ENCODE measurements at regions of chrX and their contacts with region 1.

Region 1: DNA sequence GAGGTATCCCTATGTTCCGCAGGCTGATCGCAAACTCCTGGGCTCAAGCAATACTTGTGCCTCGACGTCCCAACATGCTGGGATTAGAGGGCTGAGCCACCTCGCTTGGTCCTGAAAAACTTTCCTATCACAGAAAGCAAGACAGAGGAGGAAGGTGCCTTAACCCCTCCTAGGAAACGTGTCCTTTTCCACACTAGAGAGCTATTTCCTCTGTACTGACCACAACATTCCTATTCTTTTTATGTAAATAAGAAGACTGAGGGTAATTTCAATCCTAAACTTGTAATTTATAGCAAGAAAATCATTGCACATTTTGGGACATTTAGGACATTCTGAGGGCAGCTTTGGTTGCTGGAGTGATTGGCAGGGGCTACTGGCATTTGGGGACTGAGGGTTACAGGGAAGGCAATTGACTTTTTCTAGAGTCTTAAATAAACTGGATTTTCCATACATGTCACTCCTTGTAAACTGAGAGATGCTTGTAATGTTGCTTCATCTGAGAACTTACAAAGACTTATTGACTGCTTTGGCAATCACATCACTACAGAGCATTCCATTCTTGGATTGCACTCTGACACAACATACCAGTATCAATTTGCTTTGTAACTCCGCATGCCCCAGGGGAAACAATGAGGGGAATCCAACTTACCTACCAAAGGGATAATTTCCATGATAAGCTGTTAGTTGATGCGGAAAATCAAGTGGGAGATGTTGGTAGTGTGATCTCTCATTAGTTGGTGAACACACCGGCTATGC is 15.6 kb downstream of the XAGE3 start:
- DNase-seq: no peak
- H3K4me3 ChIP-seq: no peak overlapping the region
- H3K4me1 ChIP-seq: no peaks in the 10 kb centered on the region
- H3K27me3 ChIP-seq: peaks cover 5% of the 10 kb centered on the region; the same call in 1 of the 2 replicates

Region 2: GRCh38 chrX:52574416-52575275 is 277.6 kb before region 1 on chrX:
- in situ Hi-C with region 1: loop called (anchors 25 kb)
- DNase-seq: peak; percentile 63 to 67
- H3K4me3 ChIP-seq: no peak overlapping the region
- H3K4me1 ChIP-seq: no peaks in the 10 kb centered on the region
- H3K27me3 ChIP-seq: no peaks in the 10 kb centered on the region; the same call in 1 of the 2 replicates

Region 3: DNA sequence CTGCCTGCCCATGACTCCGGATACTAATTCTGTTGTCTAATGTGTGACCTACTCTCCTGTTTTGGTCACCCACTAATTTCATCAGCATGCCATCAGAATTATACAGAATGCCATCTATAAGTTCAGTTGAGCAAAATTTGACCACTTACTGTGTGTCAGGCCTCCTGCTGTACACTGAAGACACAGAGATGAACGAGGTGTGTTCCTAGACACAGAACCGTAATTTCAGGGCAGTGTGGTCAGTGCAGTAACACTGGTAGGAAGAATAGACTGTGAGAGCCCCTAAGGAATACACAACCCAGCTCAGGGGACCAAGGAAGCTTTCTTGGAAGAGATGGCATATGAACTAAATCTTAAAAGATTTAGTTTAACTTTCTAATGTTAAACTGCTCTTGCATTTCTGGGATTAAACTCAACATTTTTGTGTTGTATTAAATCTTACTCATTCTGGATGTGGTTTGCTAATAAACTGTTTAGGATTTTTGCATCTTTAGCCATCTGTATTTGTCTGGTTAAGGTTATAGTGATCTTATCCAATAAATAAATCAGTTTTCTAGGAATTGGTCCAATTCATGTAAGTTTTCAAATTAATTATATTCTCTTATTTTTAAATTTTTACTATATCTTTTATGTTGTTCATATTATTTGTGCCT is 275.9 kb after region 1 on chrX:
- in situ Hi-C with region 1: no loop called
- DNase-seq: no peak
- H3K4me3 ChIP-seq: no peak overlapping the region
- H3K4me1 ChIP-seq: peaks cover 4% of the 10 kb centered on the region
- H3K27me3 ChIP-seq: no peaks in the 10 kb centered on the region

Measured in HAP-1 (cell line).